ENCODE measurements at regions of chr15 and their contacts with region 1.

Region 1: GRCh38 chr15:100349696-100350433 is 8.1 kb upstream of the ADAMTS17 start:
- DNase-seq: peak; percentile 93
- H3K4me3 Mint-ChIP-seq: peak overlapping the region; percentile 80
- H3K27ac Mint-ChIP-seq: peak overlapping the region; percentile 71
- H3K4me1 Mint-ChIP-seq: peaks cover 2% of the 10 kb centered on the region
- H3K27me3 Mint-ChIP-seq: peaks cover 8% of the 10 kb centered on the region

Region 2: DNA sequence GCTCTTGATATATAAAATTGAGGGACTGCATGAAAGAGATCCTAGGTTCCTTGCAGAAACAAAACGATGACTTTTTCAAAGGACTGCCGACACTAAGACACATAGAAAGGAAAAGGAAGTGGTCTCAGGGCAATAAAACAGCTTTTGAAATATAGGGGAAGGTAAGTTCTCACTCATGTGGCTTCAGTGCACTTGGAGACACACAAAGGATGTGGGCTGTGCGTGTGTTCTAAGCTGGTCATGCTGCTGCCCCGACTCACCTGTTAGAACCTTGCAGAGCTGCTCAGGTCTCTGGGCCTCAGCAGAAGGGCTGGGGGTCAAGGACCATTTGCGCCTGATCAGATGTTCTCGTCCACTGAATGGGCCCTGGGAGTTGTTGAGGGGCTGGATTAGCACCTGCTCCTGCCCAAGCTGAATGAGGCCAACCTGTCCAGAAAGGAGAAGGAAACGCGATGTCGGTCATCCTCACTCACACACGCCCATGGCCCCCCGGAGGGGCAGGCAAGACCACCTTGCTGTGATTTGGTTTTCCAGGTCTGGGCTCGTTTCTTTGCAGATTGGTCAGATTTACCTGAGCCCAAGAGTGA is 19.1 kb before region 1 on chr15:
- CTCF ChIA-PET with region 1: interaction called, 96 read pairs
- intact Hi-C with region 1: no loop called
- DNase-seq: peak; percentile 63
- H3K4me3 Mint-ChIP-seq: peak overlapping the region; percentile 45
- H3K27ac Mint-ChIP-seq: no peak overlapping the region
- H3K4me1 Mint-ChIP-seq: peaks cover 69% of the 10 kb centered on the region
- H3K27me3 Mint-ChIP-seq: no peaks in the 10 kb centered on the region

Region 3: DNA sequence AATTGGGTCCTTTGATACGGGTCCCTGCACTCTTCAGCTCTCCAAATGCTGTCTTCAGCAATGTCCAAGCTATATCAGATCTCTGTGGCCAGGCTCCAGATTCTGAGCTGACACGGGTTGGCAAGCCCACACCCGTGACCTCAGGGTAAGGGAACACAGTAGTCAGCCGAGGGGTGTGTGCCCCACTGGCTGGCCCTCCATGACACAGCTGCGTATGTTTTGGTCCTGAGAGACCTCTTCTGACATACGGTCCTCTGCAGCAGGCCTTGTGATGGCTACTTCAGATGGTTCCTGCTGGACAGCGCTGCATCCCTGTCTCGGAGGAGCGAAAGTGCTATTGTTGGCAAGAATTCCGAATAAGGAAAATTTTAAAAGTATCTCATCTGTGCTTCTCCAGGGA is 77.1 kb after region 1 on chr15:
- CTCF ChIA-PET with region 1: interaction called, 11 read pairs
- intact Hi-C with region 1: no loop called
- DNase-seq: no peak
- H3K4me3 Mint-ChIP-seq: no peak overlapping the region
- H3K27ac Mint-ChIP-seq: no peak overlapping the region
- H3K4me1 Mint-ChIP-seq: no peaks in the 10 kb centered on the region
- H3K27me3 Mint-ChIP-seq: no peaks in the 10 kb centered on the region

Region 4: GRCh38 chr15:100572362-100572983 is 222.6 kb after region 1 on chr15:
- CTCF ChIA-PET with region 1: interaction called, 46 read pairs
- intact Hi-C with region 1: loop called (anchors 1 kb)
- DNase-seq: no peak
- H3K4me3 Mint-ChIP-seq: no peak overlapping the region
- H3K27ac Mint-ChIP-seq: peak overlapping the region; percentile 84
- H3K4me1 Mint-ChIP-seq: peaks cover 57% of the 10 kb centered on the region
- H3K27me3 Mint-ChIP-seq: no peaks in the 10 kb centered on the region

Region 5: GRCh38 chr15:100602064-100602822 is 252.4 kb after region 1 on chr15 and contains the starts of genes ASB7 and LINS1:
- CTCF ChIA-PET with region 1: interaction called, 13 read pairs
- intact Hi-C with region 1: loop called (anchors 1 kb)
- DNase-seq: peak; percentile 99
- H3K4me3 Mint-ChIP-seq: no peak within 1 kb of the TSS
- H3K27ac Mint-ChIP-seq: no peak within 1 kb of the TSS
- H3K4me1 Mint-ChIP-seq: peaks cover 56% of the 10 kb centered on the region
- H3K27me3 Mint-ChIP-seq: no peaks in the 10 kb centered on the region
- total RNA-seq, gene ASB7: 15.6 to 16.8 TPM
- total RNA-seq, gene LINS1: 36.8 to 37.1 TPM

Region 6: GRCh38 chr15:100873029-100873677 is 523.3 kb after region 1 on chr15:
- CTCF ChIA-PET with region 1: interaction called, 11 read pairs
- intact Hi-C with region 1: loop called (anchors 1 kb)
- DNase-seq: peak; percentile 74
- H3K4me3 Mint-ChIP-seq: no peak overlapping the region
- H3K27ac Mint-ChIP-seq: no peak overlapping the region
- H3K4me1 Mint-ChIP-seq: no peaks in the 10 kb centered on the region
- H3K27me3 Mint-ChIP-seq: peaks cover 26% of the 10 kb centered on the region

Region 7: GRCh38 chr15:101008158-101009139 is 658.6 kb after region 1 on chr15:
- CTCF ChIA-PET with region 1: interaction called, 8 read pairs
- intact Hi-C with region 1: loop called (anchors 1 kb)
- DNase-seq: peak; percentile 92
- H3K4me3 Mint-ChIP-seq: peak overlapping the region; percentile 81
- H3K27ac Mint-ChIP-seq: no peak overlapping the region
- H3K4me1 Mint-ChIP-seq: peaks cover 18% of the 10 kb centered on the region
- H3K27me3 Mint-ChIP-seq: peaks cover 3% of the 10 kb centered on the region

Measured in activated naive CD4-positive, alpha-beta T cell treated with anti-CD3 and anti-CD28 coated beads for 36 hours (primary cell).